ENCODE measurements at regions of chr1 and their contacts with region 1.

Region 1: GRCh38 chr1:241531195-241532161 is 700 bp upstream of the KMO start:
- DNase-seq: no peak
- ATAC-seq: peak; percentile 66
- H3K4me3 Mint-ChIP-seq: peak overlapping the region; percentile 91
- H3K27ac Mint-ChIP-seq: peak overlapping the region; percentile 98
- H3K4me1 Mint-ChIP-seq: peaks cover 43% of the 10 kb centered on the region
- H3K27me3 Mint-ChIP-seq: no peaks in the 10 kb centered on the region
- CTCF ChIP-seq: no peak

Region 2: DNA sequence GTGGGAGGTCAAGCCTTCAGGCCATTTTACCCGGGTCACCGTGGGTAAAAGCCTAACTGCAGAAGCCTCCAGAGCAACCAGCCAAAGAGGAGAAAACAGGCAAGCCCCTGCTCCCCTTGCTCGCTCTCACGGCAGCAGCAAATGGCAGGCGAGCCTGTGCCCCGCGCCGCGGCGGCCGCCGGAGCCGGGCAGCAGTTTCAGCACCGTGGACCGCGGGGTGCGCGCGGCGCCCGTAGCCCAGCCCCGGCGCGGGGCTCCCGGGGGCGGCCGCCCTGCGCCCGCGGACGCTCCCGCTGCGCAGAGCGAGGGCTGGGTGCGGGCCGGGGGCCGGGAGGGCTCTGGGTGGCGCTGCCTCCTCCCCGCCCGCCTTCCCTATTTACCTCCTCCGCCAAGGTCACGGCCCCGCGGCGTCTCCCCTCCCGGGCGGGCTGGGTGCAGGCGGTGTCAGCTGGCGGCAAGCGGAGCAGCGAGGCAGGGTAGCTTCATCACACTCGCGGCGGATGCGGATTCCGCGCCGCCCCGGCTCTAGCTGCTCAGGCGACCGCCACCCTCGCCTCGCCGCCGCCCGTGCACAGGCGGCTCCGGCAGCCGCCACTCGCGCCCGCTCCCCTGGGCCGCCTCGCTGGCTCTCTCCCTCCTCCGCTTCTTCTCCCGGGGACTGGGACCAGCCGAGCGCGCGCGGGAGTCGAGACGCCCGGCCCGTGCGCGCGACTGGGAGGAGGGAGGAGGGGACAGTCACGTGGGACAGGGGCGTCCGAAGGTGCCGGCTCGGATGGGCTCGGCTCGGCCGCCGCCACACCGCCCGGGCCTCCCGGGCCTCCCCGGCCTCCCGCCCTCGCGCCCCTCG is 174.7 kb before region 1 on chr1 and contains the start of gene RGS7:
- CTCF ChIA-PET with region 1: no interaction called
- POLR2A ChIA-PET with region 1: no interaction called
- intact Hi-C with region 1: no loop called
- DNase-seq: peak; percentile 33
- ATAC-seq: peak; percentile 66
- H3K4me3 Mint-ChIP-seq: peak within 1 kb of the TSS; percentile 83
- H3K27ac Mint-ChIP-seq: no peak within 1 kb of the TSS
- H3K4me1 Mint-ChIP-seq: peaks cover 12% of the 10 kb centered on the region
- H3K27me3 Mint-ChIP-seq: peaks cover 36% of the 10 kb centered on the region
- CTCF ChIP-seq: no peak
- total RNA-seq, gene RGS7: 0.39 and 0.49 TPM in 2 replicates

Region 3: GRCh38 chr1:241507189-241507863 is 24.2 kb before region 1 on chr1:
- CTCF ChIA-PET with region 1: no interaction called
- POLR2A ChIA-PET with region 1: no interaction called
- intact Hi-C with region 1: no loop called
- DNase-seq: no peak
- ATAC-seq: no peak
- H3K4me3 Mint-ChIP-seq: no peak overlapping the region
- H3K27ac Mint-ChIP-seq: no peak overlapping the region
- H3K4me1 Mint-ChIP-seq: no peaks in the 10 kb centered on the region
- H3K27me3 Mint-ChIP-seq: no peaks in the 10 kb centered on the region
- CTCF ChIP-seq: no peak

Region 4: DNA sequence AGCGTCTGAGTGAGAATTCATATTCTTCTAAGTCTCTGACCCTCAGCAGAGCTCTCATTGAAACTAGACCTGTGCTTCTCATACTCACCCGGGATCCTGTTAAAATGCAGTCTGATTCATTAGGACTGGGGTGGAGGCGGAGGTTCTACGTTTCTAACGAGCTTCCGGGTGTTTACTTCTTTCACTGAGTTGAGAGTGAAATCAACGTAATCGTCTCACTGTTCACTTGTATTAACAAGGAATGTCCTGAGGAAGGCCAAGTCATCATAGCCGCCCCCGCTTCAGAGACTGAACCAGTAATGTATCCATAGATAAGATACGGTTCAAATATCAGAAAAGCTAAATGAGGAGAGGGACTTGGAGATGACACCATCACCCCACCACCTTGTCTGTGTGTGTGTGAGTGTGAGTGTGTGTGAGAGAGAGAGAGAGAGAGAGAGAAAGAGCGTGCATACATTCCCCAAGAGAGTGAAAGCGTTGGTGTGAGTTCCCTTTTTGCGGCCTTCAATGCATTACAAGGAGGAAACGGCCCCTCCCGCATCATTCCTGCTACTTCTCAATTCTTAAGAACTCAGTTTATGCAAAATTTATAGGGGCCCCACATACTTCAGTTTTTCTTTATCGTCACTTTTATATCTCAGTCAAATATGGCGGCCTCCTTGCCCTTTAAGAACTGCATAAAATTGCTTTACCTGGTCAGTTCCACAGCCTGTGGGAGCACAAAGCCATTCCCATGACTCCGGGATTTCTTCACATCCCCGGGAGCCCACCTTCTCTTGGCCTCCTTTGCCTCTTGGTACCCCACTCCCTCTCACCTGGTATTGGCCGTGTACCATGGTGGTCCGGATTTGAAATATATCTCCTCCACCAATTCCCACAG is 20.5 kb after region 1 on chr1:
- CTCF ChIA-PET with region 1: interaction called, 8 read pairs
- POLR2A ChIA-PET with region 1: interaction called, 157 read pairs
- intact Hi-C with region 1: loop called (anchors 1 kb)
- DNase-seq: peak; percentile 46
- ATAC-seq: peak; percentile 89
- H3K4me3 Mint-ChIP-seq: peak overlapping the region; percentile 83
- H3K27ac Mint-ChIP-seq: peak overlapping the region; percentile 100
- H3K4me1 Mint-ChIP-seq: peaks cover 62% of the 10 kb centered on the region
- H3K27me3 Mint-ChIP-seq: peaks cover 2% of the 10 kb centered on the region
- CTCF ChIP-seq: no peak

Region 5: DNA sequence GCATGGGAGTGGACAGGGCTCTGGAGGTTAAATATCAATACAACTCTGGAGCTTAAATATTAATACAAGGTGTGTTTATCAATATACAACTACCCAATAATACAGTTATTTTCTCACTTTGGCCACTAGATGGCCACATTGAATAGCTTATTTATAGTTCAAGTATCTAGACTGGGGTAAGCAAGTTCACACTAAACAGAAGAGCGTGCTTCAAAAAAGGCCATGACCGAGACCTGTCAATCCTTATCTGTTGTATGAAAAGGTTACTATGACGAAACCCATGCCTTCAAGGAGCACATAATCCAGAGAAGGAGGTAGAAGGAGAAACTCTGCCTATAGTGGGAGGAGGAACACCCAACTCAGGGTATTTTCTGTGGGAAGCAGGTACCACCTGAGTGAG is 79.6 kb after region 1 on chr1:
- CTCF ChIA-PET with region 1: interaction called, 12 read pairs
- POLR2A ChIA-PET with region 1: interaction called, 6 read pairs
- intact Hi-C with region 1: loop called (anchors 1 kb)
- DNase-seq: no peak
- ATAC-seq: peak; percentile 96
- H3K4me3 Mint-ChIP-seq: no peak overlapping the region
- H3K27ac Mint-ChIP-seq: no peak overlapping the region
- H3K4me1 Mint-ChIP-seq: peaks cover 8% of the 10 kb centered on the region
- H3K27me3 Mint-ChIP-seq: no peaks in the 10 kb centered on the region
- CTCF ChIP-seq: no peak

Region 6: DNA sequence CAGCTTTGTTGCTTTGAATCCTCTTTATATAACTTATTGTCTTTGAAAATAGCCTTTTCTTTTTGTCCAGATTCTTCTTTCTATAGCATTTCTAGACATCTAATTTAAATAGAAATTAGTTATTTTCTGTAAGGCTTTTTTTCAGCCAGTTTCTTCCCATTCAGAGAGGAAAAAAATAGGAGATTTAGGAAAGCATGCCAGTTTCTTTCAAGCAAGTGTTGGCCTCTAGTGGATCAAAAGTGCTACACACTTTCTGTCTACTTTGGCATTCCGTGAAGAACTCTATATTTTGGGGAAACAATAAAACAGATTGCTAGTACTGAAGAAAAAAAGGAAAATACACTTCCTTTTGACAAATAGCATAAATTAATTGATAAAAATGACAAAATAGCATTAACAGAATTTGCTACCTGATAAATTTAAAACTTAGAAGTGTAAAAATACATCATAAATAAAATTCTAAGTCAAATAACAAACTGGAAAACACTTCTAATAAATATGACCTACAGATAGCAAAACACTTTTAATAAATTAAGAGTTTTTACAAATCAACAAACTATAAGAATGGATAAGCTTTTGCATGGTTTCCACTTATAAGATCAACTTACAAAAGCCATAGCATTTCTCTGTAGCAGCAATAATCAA is 303.4 kb after region 1 on chr1:
- CTCF ChIA-PET with region 1: interaction called, 3 read pairs
- POLR2A ChIA-PET with region 1: no interaction called
- intact Hi-C with region 1: loop called (anchors 1 kb)
- DNase-seq: no peak
- ATAC-seq: no peak
- H3K4me3 Mint-ChIP-seq: no peak overlapping the region
- H3K27ac Mint-ChIP-seq: no peak overlapping the region
- H3K4me1 Mint-ChIP-seq: peaks cover 10% of the 10 kb centered on the region
- H3K27me3 Mint-ChIP-seq: no peaks in the 10 kb centered on the region
- CTCF ChIP-seq: no peak

Region 7: GRCh38 chr1:241985787-241986186 is 454.3 kb after region 1 on chr1:
- CTCF ChIA-PET with region 1: no interaction called
- POLR2A ChIA-PET with region 1: no interaction called
- intact Hi-C with region 1: loop called (anchors 1 kb)
- DNase-seq: no peak
- ATAC-seq: no peak
- H3K4me3 Mint-ChIP-seq: no peak overlapping the region
- H3K27ac Mint-ChIP-seq: no peak overlapping the region
- H3K4me1 Mint-ChIP-seq: no peaks in the 10 kb centered on the region
- H3K27me3 Mint-ChIP-seq: no peaks in the 10 kb centered on the region
- CTCF ChIP-seq: no peak

Region 8: DNA sequence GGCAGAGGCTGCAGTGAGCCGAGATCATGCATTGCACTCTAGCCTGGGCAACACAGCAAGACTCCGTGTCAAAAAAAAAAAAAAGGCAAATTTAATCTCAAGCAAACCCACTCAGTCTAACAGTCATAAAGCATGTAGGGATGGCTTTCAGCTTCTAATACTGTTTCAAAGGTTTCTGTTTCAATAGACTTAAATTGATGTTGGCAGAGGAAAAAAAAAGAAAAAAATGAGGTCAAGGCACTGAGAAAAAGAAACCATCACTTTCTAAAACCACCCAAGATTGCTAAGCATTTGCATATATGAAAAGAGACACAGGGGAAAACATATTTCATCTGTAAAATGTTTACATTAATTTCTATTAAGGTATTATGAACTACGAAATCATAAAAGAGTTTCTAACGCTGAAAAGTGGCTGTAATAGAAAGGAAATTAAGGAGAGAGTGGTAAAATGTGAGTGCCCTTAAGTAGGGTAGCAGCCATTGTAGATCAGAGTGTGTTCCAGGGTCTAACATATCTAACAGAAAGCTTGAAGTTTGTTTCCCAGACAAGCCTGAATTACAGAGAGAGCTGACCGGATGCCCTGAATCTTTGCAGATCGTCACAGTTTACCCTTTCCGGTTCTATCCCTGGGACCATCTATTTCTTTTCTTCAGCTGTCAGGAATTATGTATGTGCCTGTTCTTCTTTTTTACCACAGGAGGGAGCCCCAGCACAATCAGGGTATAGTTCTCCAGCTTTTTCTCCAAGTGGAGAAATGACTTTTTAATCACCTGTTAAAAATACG is 923.0 kb after region 1 on chr1:
- CTCF ChIA-PET with region 1: no interaction called
- POLR2A ChIA-PET with region 1: no interaction called
- intact Hi-C with region 1: loop called (anchors 5 kb)
- DNase-seq: no peak
- ATAC-seq: no peak
- H3K4me3 Mint-ChIP-seq: no peak overlapping the region
- H3K27ac Mint-ChIP-seq: no peak overlapping the region
- H3K4me1 Mint-ChIP-seq: peaks cover 2% of the 10 kb centered on the region
- H3K27me3 Mint-ChIP-seq: peaks cover 10% of the 10 kb centered on the region
- CTCF ChIP-seq: no peak